HepG2 (cell line): ENCODE measurements at regions of chr7 and their contacts with region 1.

Region 1: GRCh38 chr7:104983578-104984539 is 30.1 kb upstream of the KMT2E start:
- DNase-seq: peak; percentile 81
- ATAC-seq: peak; percentile 98
- H3K4me3 ChIP-seq: peak overlapping the region; percentile 70 to 79 (median 78)
- H3K27ac ChIP-seq: peak overlapping the region; percentile 92
- H3K4me1 ChIP-seq: peaks cover 34% of the 10 kb centered on the region
- H3K27me3 ChIP-seq: no peaks in the 10 kb centered on the region
- CTCF ChIP-seq: peak; percentile 72
- EP300 ChIP-seq: 0 out of 4 replicates have a peak, but pooled peaks of 1 of the 2 experiments have one; percentile 7
- POLR2A ChIP-seq: peak; percentile 74 to 90
- RAD21 ChIP-seq: peak; percentile 70

Region 2: GRCh38 chr7:104275907-104276306 is 708.0 kb before region 1 on chr7:
- CTCF ChIA-PET with region 1: no interaction called
- POLR2A ChIA-PET with region 1: no interaction called
- in situ Hi-C with region 1: no loop called
- intact Hi-C with region 1: no loop called
- DNase-seq: peak; percentile 4
- ATAC-seq: no peak
- H3K4me3 ChIP-seq: no peak overlapping the region
- H3K27ac ChIP-seq: no peak overlapping the region
- H3K4me1 ChIP-seq: peaks cover 5% of the 10 kb centered on the region; the same call in 1 of the 2 replicates
- H3K27me3 ChIP-seq: no peaks in the 10 kb centered on the region
- CTCF ChIP-seq: no peak
- EP300 ChIP-seq: no peak
- POLR2A ChIP-seq: no peak
- RAD21 ChIP-seq: no peak

Region 3: GRCh38 chr7:105013221-105013815 is 29.5 kb after region 1 on chr7:
- CTCF ChIA-PET with region 1: no interaction called
- POLR2A ChIA-PET with region 1: interaction called, 50 read pairs
- in situ Hi-C with region 1: no loop called
- intact Hi-C with region 1: loop called (anchors 1 kb)
- DNase-seq: peak; percentile 88
- ATAC-seq: peak; percentile 84
- H3K4me3 ChIP-seq: peak overlapping the region; percentile 98 to 100 (median 99)
- H3K27ac ChIP-seq: peak overlapping the region; percentile 100
- H3K4me1 ChIP-seq: peaks cover 39% of the 10 kb centered on the region
- H3K27me3 ChIP-seq: no peaks in the 10 kb centered on the region; a peak in 1 of 5 replicates
- CTCF ChIP-seq: peak; percentile 54
- EP300 ChIP-seq: 0 out of 4 replicates have a peak, but pooled peaks of 1 of the 2 experiments have one; percentile 8
- POLR2A ChIP-seq: peak; percentile 82 to 88
- RAD21 ChIP-seq: no peak; the same call in 1 of the 2 replicates

Region 4: GRCh38 chr7:105046414-105046813 is 62.6 kb after region 1 on chr7:
- CTCF ChIA-PET with region 1: interaction called, 7 read pairs
- POLR2A ChIA-PET with region 1: interaction called, 4 read pairs
- in situ Hi-C with region 1: no loop called
- intact Hi-C with region 1: loop called (anchors 1 kb)
- DNase-seq: no peak
- ATAC-seq: no peak
- H3K4me3 ChIP-seq: no peak overlapping the region
- H3K27ac ChIP-seq: no peak overlapping the region
- H3K4me1 ChIP-seq: no peaks in the 10 kb centered on the region
- H3K27me3 ChIP-seq: no peaks in the 10 kb centered on the region
- CTCF ChIP-seq: no peak
- EP300 ChIP-seq: no peak
- POLR2A ChIP-seq: no peak
- RAD21 ChIP-seq: no peak